PC-9 (cell line): ENCODE measurements at regions of chr3 and their contacts with region 1.

Region 1: GRCh38 chr3:158532099-158532734 is 38.8 kb upstream of the MLF1 start:
- DNase-seq: peak; percentile 14 to 36
- H3K4me3 ChIP-seq: no peak overlapping the region
- H3K27ac ChIP-seq: no peak overlapping the region
- H3K4me1 ChIP-seq: no peaks in the 10 kb centered on the region
- H3K27me3 ChIP-seq: no peaks in the 10 kb centered on the region
- CTCF ChIP-seq: peak; percentile 85

Region 2: GRCh38 chr3:157606011-157606851 is 926.0 kb before region 1 on chr3:
- CTCF ChIA-PET with region 1: interaction called, 7 read pairs
- POLR2A ChIA-PET with region 1: no interaction called
- intact Hi-C with region 1: loop called (anchors 1 kb)
- DNase-seq: peak; percentile 45 to 68
- H3K4me3 ChIP-seq: no peak overlapping the region
- H3K27ac ChIP-seq: no peak overlapping the region
- H3K4me1 ChIP-seq: no peaks in the 10 kb centered on the region
- H3K27me3 ChIP-seq: no peaks in the 10 kb centered on the region
- CTCF ChIP-seq: peak; percentile 91

Region 3: DNA sequence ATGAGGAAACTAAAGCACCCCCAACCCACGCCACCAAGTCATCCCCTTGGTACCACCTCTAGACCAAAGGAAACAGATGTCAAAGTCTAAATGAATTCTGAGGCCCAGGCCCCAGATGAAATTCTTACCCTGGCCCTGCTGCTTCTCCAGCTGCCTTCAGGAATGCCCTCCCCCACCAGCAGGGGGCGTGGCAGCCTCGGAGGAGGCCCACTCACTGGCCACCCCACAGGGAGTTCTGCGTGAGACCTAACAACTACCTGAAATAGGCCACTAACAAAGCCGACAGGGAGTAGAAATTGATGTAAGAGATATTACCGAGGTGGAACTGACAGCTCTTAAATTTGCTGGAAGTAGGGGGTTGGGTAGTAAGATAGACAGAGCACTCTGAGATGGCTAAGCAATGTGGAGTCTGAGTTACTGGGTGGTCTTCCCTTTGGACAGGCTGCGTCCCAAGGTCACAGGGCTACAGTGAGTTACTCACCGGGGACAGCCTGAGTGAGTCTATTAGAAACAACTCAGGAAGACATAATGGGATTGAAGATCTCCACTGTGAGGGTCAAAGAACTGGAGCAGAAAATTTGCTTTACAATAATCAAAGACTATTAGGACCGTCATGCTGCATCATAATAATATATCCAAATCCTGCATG is 666.7 kb before region 1 on chr3:
- CTCF ChIA-PET with region 1: no interaction called
- POLR2A ChIA-PET with region 1: no interaction called
- intact Hi-C with region 1: loop called (anchors 1 kb)
- DNase-seq: peak in 1 of 2 experiments; percentile 24
- H3K4me3 ChIP-seq: no peak overlapping the region
- H3K27ac ChIP-seq: no peak overlapping the region
- H3K4me1 ChIP-seq: no peaks in the 10 kb centered on the region
- H3K27me3 ChIP-seq: no peaks in the 10 kb centered on the region
- CTCF ChIP-seq: peak; percentile 78

Region 4: DNA sequence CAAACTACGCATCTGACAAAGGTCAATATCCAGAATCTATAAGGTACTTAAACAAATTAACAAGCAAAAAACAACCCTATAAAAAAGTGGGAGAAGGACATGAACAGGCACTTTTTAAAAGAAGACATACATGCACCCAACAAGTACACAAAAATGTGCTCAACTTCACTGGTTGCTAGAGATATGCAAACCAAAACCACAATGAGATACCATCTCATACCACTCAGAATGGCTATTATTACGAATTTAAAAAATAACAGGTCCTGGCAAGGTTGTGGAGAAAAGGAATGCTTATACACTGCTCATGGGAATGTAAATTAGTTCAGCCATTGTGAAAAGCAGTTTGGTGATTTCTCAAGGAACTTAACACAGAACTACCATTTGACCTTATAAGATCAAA is 136.8 kb before region 1 on chr3:
- CTCF ChIA-PET with region 1: no interaction called
- POLR2A ChIA-PET with region 1: no interaction called
- intact Hi-C with region 1: no loop called
- DNase-seq: no peak
- H3K4me3 ChIP-seq: no peak overlapping the region
- H3K27ac ChIP-seq: no peak overlapping the region
- H3K4me1 ChIP-seq: no peaks in the 10 kb centered on the region
- H3K27me3 ChIP-seq: no peaks in the 10 kb centered on the region
- CTCF ChIP-seq: no peak